ENCODE measurements at regions of chr5 and their contacts with region 1.

Region 1: DNA sequence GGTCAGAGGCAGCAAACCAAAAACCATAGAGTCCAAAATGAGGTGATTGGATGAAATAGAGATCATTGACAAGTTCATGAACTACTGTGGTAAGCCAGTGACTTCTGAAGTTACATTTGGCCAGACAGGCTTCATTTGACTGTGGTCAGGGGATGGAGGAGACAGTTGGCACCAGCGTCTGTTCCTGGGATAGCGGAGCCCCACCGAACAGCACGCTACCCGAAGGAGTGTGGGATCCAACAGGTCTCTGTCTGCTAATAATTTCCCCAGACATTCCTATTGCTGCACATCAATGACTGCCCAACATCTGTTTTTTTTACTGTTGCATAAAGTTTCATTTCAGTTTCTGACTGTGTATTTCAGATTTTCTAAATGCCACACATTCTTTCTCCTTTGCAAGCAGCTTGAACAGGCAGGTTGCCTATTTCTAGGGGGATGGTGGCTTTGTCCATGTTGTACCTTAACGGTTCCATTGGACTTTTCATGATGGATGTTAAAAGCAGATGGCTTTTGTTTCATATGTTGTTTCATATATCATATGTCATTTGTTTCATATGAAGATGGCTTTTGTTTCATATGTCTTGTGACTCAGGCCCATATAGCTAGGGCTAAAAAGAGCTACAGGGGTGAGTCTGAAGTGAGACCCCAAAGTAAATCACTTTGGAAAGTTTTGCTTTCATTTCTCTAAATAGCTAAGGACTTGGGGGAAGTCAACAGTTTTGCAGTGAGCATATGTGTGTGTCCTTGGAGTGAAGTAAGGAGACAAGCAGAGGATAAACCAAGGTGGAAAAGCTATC is 180.8 kb downstream of the GOLPH3 start:
- DNase-seq: no peak
- ATAC-seq: peak in 1 of 4 donors; percentile 16
- H3K4me3 ChIP-seq: no peak overlapping the region
- H3K27ac ChIP-seq: no peak overlapping the region
- H3K4me1 ChIP-seq: peaks cover 0 to 39% (median 16%) of the 10 kb centered on the region in 12 donors
- H3K27me3 ChIP-seq: no peaks in the 10 kb centered on the region
- CTCF ChIP-seq: no peak
- POLR2A ChIP-seq: no peak

Region 2: GRCh38 chr5:32013658-32014057 is 20.3 kb after region 1 on chr5:
- intact Hi-C with region 1: loop called in 1 of 10 experiments (anchors 2 kb)
- DNase-seq: peak in 2 of 5 donors; percentile 47 to 48
- ATAC-seq: peak in 3 of 4 donors; percentile 57 to 75 (median 58)
- H3K4me3 ChIP-seq: no peak overlapping the region
- H3K27ac ChIP-seq: no peak overlapping the region
- H3K4me1 ChIP-seq: peaks cover 0 to 28% (median 15%) of the 10 kb centered on the region in 12 donors
- H3K27me3 ChIP-seq: no peaks in the 10 kb centered on the region
- CTCF ChIP-seq: no peak
- POLR2A ChIP-seq: no peak